Psoas muscle (tissue), 8 donors: ENCODE measurements at regions of chr3 and their contacts with region 1.

Region 1: DNA sequence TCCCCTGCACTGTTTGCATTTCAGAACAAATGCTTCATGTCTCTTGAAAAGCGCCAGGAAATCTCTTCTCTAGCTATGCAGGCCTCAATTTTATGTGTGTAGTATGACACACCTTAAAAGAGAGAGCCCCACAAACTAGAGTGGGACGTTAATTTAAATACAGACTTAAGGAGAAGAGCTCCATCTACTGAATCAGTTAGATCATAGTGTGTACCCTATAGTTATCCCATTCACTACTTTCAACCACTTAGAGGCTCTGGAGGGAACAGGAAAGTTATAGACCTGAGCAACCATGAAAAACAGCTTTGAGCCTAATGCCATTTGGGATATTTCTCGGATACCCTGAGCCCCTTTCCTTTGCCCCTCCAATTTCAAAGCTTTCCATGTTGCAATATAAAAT is 153.7 kb downstream of the TIGIT start:
- DNase-seq: no peak
- ATAC-seq: peak in 2 of 4 donors; percentile 24 to 26
- H3K4me3 ChIP-seq: no peak overlapping the region
- H3K27ac ChIP-seq: peak overlapping the region; percentile 33
- H3K4me1 ChIP-seq: peaks cover 85% of the 10 kb centered on the region
- H3K27me3 ChIP-seq: no peaks in the 10 kb centered on the region
- CTCF ChIP-seq: no peak

Region 2: GRCh38 chr3:114383875-114384557 is 63.5 kb before region 1 on chr3:
- intact Hi-C with region 1: loop called in 1 of 2 experiments (anchors 10 kb)
- DNase-seq: peak; percentile 78 to 88
- ATAC-seq: peak; percentile 92 to 94 (median 94)
- H3K4me3 ChIP-seq: peak overlapping the region; percentile 56
- H3K27ac ChIP-seq: peak overlapping the region; percentile 51
- H3K4me1 ChIP-seq: peaks cover 46% of the 10 kb centered on the region
- H3K27me3 ChIP-seq: no peaks in the 10 kb centered on the region
- CTCF ChIP-seq: peak; percentile 94

Region 3: GRCh38 chr3:114498779-114499370 is 51.3 kb after region 1 on chr3:
- intact Hi-C with region 1: no loop called
- DNase-seq: no peak
- ATAC-seq: peak; percentile 64 to 80 (median 70)
- H3K4me3 ChIP-seq: no peak overlapping the region
- H3K27ac ChIP-seq: peak overlapping the region; percentile 43
- H3K4me1 ChIP-seq: peaks cover 67% of the 10 kb centered on the region
- H3K27me3 ChIP-seq: no peaks in the 10 kb centered on the region
- CTCF ChIP-seq: no peak